ENCODE measurements at regions of chr2 and their contacts with region 1.

Region 1: GRCh38 chr2:155310589-155310988 is 612.1 kb downstream of the KCNJ3 start:
- DNase-seq: no peak
- H3K4me3 Mint-ChIP-seq: no peak overlapping the region
- H3K27ac Mint-ChIP-seq: no peak overlapping the region
- H3K4me1 Mint-ChIP-seq: no peaks in the 10 kb centered on the region
- H3K27me3 Mint-ChIP-seq: no peaks in the 10 kb centered on the region

Region 2: DNA sequence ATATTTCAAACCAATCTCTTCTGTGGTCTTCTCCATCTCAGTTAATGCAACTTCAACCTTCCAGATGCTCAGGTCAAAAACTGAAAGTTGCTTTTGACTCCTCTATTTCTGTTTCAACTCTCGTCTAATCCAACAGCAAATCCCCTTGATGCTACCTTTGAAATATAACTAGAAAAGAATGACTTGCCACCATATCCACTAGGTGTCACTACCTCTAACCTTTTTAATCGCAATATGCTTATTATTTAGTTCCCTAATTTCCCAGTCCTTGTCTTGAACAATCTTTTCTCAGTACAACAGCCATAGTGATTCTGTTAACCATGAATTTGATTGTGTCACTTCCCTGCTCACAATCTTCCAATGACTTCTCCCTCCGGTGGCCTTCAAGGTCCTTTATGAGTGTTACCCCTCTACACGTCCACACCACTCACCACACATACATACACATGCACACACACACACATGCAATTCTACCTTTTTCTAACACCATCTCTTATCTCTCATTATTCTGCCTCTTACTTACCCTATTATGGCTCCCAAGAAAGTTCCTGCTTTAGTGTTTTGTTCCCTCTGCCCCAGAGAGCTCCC is 857.6 kb before region 1 on chr2:
- CTCF ChIA-PET with region 1: no interaction called
- intact Hi-C with region 1: loop called (anchors 1 kb)
- DNase-seq: no peak
- H3K4me3 Mint-ChIP-seq: no peak overlapping the region
- H3K27ac Mint-ChIP-seq: no peak overlapping the region
- H3K4me1 Mint-ChIP-seq: no peaks in the 10 kb centered on the region
- H3K27me3 Mint-ChIP-seq: no peaks in the 10 kb centered on the region